ENCODE measurements at regions of chr15 and their contacts with region 1.

Region 1: GRCh38 chr15:82046666-82047452 is 1.0 kb upstream of the MEX3B start:
- DNase-seq: peak; percentile 76
- ATAC-seq: peak; percentile 78
- H3K4me3 ChIP-seq: peak overlapping the region; percentile 48 to 61
- H3K27ac ChIP-seq: peak overlapping the region; percentile 72
- H3K4me1 ChIP-seq: peaks cover 5 to 21% of the 10 kb centered on the region in 2 experiments
- H3K27me3 ChIP-seq: no peaks in the 10 kb centered on the region
- CTCF ChIP-seq: peak; percentile 47 to 77 (median 60); a peak in 5 of 6 replicates
- POLR2A ChIP-seq: no peak
- RAD21 ChIP-seq: peak; percentile 68

Region 2: DNA sequence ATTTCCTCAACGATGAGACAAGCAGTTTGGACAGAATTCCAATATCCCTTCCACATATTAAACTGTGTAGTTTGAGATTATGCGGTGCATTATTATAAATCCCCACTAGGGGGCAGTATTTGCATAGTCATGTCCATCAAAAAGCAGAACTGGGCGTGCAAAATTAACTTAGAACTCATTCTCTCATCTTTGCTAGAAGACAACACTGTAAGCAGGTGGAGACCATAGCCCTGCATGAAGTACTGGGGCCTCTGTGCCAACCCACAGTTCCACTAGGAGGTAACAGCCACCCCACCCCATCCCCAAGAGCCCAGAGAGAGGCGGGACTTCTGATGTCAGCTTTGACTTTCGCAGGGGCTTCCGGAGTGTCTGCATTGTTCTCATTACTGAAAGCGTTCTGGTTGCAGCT is 566.2 kb before region 1 on chr15:
- CTCF ChIA-PET with region 1: no interaction called
- POLR2A ChIA-PET with region 1: no interaction called
- RAD21 ChIA-PET with region 1: no interaction called
- intact Hi-C with region 1: loop called (anchors 1 kb)
- DNase-seq: peak; percentile 24
- ATAC-seq: peak; percentile 78
- H3K4me3 ChIP-seq: no peak overlapping the region
- H3K27ac ChIP-seq: no peak overlapping the region
- H3K4me1 ChIP-seq: no peaks in the 10 kb centered on the region
- H3K27me3 ChIP-seq: peaks cover 27% of the 10 kb centered on the region; the same call in 1 of the 2 replicates
- CTCF ChIP-seq: peak; percentile 62 to 89 (median 72); a peak in 5 of 6 replicates
- POLR2A ChIP-seq: no peak
- RAD21 ChIP-seq: peak; percentile 80